ENCODE measurements at regions of chr3 and their contacts with region 1.

Region 1: GRCh38 chr3:191235331-191236314 is 36.6 kb downstream of the OSTN start:
- DNase-seq: peak in 1 of 2 experiments; percentile 34
- H3K4me3 ChIP-seq: no peak overlapping the region
- H3K27ac ChIP-seq: peak overlapping the region; percentile 85; the same call in 1 of the 2 replicates
- H3K4me1 ChIP-seq: peaks cover 47% of the 10 kb centered on the region
- H3K27me3 ChIP-seq: no peaks in the 10 kb centered on the region
- CTCF ChIP-seq: no peak

Region 2: DNA sequence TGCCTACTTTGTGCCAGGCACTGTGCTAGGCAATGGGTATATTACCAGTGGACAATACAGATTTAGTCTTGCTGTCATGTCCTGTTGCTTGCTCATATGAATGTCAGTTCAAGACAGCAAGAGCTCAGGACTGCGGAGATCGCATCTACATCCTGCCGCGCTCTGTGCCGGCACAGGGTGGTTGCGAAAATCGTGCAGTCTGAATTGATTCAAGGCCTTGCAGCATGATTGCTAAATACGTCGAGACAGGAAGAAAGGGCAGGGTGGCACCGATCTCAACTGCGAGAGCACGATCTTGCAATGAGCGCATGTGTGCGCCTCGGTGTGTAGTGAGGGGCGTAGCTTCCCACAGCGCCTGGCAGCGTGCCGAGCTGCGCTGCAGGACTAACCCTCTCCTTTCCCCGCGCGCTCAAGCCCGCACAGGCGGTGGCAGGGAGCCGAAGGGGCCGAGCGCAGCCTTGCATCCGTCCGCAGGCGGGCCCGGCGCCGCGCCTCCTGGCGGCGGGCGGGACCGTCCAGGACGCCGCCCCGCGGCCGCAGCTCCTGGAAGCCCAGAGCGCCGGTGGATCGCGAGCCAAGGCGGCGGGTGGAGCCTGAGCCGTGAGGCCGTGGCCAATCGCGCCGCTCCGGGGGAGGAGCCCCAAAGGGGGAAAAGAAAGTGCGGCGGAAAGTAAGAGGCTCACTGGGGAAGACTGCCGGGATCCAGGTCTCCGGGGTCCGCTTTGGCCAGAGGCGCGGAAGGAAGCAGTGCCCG is 722.0 kb before region 1 on chr3 and contains the start of gene IL1RAP:
- CTCF ChIA-PET with region 1: no interaction called
- POLR2A ChIA-PET with region 1: no interaction called
- intact Hi-C with region 1: loop called (anchors 5 kb)
- DNase-seq: peak; percentile 88 to 96
- H3K4me3 ChIP-seq: peak within 1 kb of the TSS; percentile 80
- H3K27ac ChIP-seq: peak within 1 kb of the TSS; percentile 41
- H3K4me1 ChIP-seq: peaks cover 27% of the 10 kb centered on the region
- H3K27me3 ChIP-seq: no peaks in the 10 kb centered on the region
- CTCF ChIP-seq: no peak; the same call in none of the 2 replicates
- total RNA-seq, gene IL1RAP: 8.4 and 13.3 TPM in 2 replicates

Region 3: GRCh38 chr3:190585805-190586630 is 649.6 kb before region 1 on chr3:
- CTCF ChIA-PET with region 1: no interaction called
- POLR2A ChIA-PET with region 1: no interaction called
- intact Hi-C with region 1: loop called (anchors 5 kb)
- DNase-seq: peak; percentile 80 to 86
- H3K4me3 ChIP-seq: no peak overlapping the region
- H3K27ac ChIP-seq: peak overlapping the region; percentile 57
- H3K4me1 ChIP-seq: peaks cover 22% of the 10 kb centered on the region
- H3K27me3 ChIP-seq: no peaks in the 10 kb centered on the region
- CTCF ChIP-seq: no peak

Region 4: GRCh38 chr3:191051037-191051436 is 184.6 kb before region 1 on chr3:
- CTCF ChIA-PET with region 1: no interaction called
- POLR2A ChIA-PET with region 1: no interaction called
- intact Hi-C with region 1: loop called (anchors 10 kb)
- DNase-seq: peak in 1 of 2 experiments; percentile 58
- H3K4me3 ChIP-seq: no peak overlapping the region
- H3K27ac ChIP-seq: no peak overlapping the region
- H3K4me1 ChIP-seq: no peaks in the 10 kb centered on the region
- H3K27me3 ChIP-seq: no peaks in the 10 kb centered on the region
- CTCF ChIP-seq: peak; percentile 87

Region 5: GRCh38 chr3:191198932-191199331 is 36.7 kb before region 1 on chr3 and contains the start of gene OSTN:
- CTCF ChIA-PET with region 1: no interaction called
- POLR2A ChIA-PET with region 1: no interaction called
- intact Hi-C with region 1: no loop called
- DNase-seq: no peak
- H3K4me3 ChIP-seq: no peak within 1 kb of the TSS
- H3K27ac ChIP-seq: no peak within 1 kb of the TSS
- H3K4me1 ChIP-seq: no peaks in the 10 kb centered on the region
- H3K27me3 ChIP-seq: no peaks in the 10 kb centered on the region
- CTCF ChIP-seq: no peak
- total RNA-seq, gene OSTN: not detected in 2 replicates

Region 6: GRCh38 chr3:191220908-191221307 is 14.7 kb before region 1 on chr3:
- CTCF ChIA-PET with region 1: no interaction called
- POLR2A ChIA-PET with region 1: no interaction called
- intact Hi-C with region 1: no loop called
- DNase-seq: no peak
- H3K4me3 ChIP-seq: no peak overlapping the region
- H3K27ac ChIP-seq: no peak overlapping the region
- H3K4me1 ChIP-seq: no peaks in the 10 kb centered on the region
- H3K27me3 ChIP-seq: no peaks in the 10 kb centered on the region
- CTCF ChIP-seq: no peak

Region 7: DNA sequence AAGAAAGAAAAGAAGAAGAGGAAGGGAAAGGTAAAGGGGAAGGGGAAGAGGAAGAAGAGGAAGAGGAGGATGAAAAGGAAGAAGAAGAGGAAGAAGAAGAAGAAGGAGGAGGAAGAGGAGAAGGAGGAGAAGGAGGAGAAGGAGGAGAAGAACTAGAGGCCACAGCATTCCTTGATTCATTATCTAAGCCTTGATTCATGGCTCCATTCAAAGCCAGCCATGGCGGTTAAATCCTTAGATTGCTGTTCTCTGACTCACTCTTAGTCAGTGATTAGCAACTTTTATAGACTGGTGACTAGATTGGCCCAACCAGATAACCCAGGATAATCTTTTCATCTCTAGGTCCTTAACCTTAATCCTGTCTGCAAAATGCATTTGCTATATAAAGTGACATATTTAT is 11.0 kb after region 1 on chr3:
- CTCF ChIA-PET with region 1: no interaction called
- POLR2A ChIA-PET with region 1: no interaction called
- intact Hi-C with region 1: no loop called
- DNase-seq: peak; percentile 46 to 86
- H3K4me3 ChIP-seq: no peak overlapping the region
- H3K27ac ChIP-seq: no peak overlapping the region
- H3K4me1 ChIP-seq: no peaks in the 10 kb centered on the region
- H3K27me3 ChIP-seq: no peaks in the 10 kb centered on the region
- CTCF ChIP-seq: no peak

Region 8: DNA sequence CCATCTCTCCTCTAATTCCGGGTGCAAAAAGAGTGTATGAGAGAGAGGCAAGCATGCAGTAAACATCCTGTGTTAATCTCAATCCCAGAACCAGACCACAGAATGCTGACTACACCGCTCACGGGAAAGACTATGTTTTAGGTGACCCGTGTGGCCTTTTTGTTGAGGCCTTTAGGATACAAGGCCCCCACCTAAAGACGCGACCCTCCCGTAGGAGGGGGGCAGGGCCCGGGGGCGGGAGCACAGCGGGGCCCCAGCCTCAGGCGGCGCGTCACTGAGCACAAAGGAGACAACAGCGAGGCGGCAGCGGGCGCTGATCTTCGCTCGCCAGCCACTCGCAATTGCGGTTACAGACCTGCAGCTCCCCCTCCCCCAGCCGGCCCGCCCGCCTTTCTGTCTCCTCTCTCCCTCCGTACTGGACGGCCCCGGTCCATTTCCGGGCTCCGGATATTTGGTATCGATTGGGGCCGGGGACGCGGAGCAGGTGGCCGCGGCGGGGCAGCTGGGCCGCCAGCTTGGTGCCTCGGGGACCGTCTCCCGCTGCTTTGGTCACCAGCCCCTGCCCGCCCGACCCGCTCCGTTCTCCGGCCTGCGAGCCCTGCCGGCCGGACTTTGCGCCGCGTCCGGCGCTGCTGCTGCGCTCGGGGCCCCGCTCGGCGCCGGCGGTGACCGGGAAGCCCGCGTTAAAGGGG is 93.5 kb after region 1 on chr3 and contains the start of gene CCDC50:
- CTCF ChIA-PET with region 1: no interaction called
- POLR2A ChIA-PET with region 1: interaction called, 8 read pairs
- intact Hi-C with region 1: loop called (anchors 1 kb)
- DNase-seq: peak; percentile 64 to 80
- H3K4me3 ChIP-seq: peak within 1 kb of the TSS; percentile 85
- H3K27ac ChIP-seq: peak within 1 kb of the TSS; percentile 78
- H3K4me1 ChIP-seq: peaks cover 34% of the 10 kb centered on the region
- H3K27me3 ChIP-seq: no peaks in the 10 kb centered on the region
- CTCF ChIP-seq: no peak
- total RNA-seq, gene CCDC50: 106 and 118 TPM in 2 replicates

Region 9: DNA sequence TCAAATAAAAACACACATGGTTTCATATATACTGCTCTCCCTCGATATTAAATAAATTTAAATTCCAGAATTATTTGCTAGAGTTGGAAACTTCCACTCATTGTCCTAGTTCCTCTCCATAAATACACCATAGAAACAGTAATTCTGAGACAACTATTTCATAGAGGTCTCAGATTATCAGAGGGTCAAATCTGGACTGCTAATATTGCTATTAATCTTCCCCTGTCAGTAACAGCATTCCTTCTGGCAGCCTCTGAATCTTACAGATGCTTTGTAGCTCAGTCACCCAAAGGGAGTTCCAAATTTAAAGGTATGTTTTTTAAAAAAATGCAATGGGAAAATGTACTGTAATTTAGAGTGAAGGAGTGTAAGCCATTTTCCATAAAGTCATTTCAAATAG is 654.1 kb after region 1 on chr3:
- CTCF ChIA-PET with region 1: no interaction called
- POLR2A ChIA-PET with region 1: no interaction called
- intact Hi-C with region 1: loop called (anchors 5 kb)
- DNase-seq: peak; percentile 27 to 74
- H3K4me3 ChIP-seq: no peak overlapping the region
- H3K27ac ChIP-seq: no peak overlapping the region
- H3K4me1 ChIP-seq: peaks cover 8% of the 10 kb centered on the region; the same call in 1 of the 2 replicates
- H3K27me3 ChIP-seq: no peaks in the 10 kb centered on the region
- CTCF ChIP-seq: no peak

Measured in PC-9 (cell line).